ENCODE measurements at regions of chr9 and their contacts with region 1.

Region 1: DNA sequence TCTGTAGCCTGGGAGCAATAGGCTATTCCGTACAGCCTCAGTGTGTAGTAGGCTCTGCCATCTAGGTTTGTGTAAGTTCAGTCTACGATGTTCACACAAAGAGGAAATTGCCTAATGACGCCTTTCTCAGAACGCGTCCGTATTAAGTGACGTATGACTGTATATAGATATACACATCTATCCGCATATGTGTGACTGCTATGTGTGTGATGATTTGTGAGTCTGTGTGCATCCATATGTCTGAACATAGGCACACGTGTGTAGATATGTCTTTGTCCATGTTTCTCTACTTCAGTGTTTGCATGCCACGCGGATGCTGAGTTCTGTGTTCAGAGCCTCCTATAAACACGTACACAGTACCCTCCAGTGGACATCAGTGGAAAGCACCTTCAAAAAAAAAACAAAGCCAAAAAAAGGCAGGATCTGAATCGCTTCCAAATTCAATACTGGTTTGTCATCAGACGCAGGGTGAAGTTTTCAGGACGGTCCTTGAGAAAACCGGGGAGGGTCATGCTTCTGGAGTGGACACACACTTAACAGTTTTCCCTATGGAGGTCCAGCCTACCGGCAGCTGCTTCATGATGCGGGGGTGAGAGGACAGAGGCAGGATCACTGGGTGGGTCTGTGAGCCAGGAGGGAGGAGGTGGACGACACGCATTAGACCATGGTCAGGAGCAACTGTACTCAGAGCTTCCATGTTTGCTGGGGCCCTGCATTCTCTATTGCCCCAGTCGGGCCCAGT is 29.5 kb upstream of the ALDH1B1 start:
- DNase-seq: peak in 1 of 2 donors; percentile 73
- ATAC-seq: peak; percentile 80
- H3K4me3 ChIP-seq: no peak overlapping the region
- H3K27ac ChIP-seq: no peak overlapping the region
- H3K4me1 ChIP-seq: no peaks in the 10 kb centered on the region
- H3K27me3 ChIP-seq: no peaks in the 10 kb centered on the region

Region 2: DNA sequence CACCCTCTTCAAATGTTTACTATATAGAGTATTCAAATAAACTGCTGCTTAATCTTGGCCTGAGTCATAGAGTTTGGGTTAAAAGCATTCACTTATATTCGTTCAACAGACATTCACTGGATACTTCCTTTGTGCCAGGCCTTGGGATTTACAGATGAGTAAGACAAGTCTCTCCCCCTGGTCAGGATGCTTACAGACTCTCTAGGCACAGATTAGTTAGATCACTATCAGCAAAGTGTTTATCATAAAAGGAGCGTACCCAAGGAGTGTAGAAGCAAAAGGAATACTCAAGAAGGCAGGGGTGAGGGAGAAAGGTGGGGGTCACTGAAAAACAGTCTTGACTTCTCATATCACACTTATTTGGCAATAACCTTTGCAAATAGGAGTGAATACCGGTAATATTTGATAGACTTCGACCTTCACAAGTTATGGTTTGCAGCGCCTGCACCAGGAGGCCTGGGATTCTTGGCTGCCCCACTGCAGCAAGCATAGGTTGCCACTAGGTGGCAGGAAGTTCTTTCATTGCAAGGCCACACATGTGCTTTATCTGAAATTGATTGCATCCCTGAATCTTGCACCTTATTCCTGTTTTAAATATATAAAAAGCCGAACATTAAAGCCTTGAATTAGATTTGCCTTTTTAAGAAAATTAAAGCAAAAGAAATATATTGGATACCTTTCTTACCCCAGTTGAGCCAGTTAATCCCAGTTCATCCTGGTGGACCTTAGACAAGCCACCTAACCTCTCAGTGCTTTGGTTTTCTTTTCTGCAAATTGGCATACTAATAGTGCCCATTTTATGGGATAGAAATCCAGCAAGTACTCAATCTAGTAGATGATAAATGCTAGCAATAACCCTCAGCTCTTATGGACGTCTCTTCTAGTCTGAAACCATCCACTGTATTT is 615.9 kb before region 1 on chr9:
- intact Hi-C with region 1: loop called in 1 of 2 experiments (anchors 5 kb)
- DNase-seq: peak in 1 of 2 donors; percentile 65
- ATAC-seq: peak; percentile 71
- H3K4me3 ChIP-seq: no peak overlapping the region
- H3K27ac ChIP-seq: no peak overlapping the region
- H3K4me1 ChIP-seq: no peaks in the 10 kb centered on the region
- H3K27me3 ChIP-seq: no peaks in the 10 kb centered on the region

Region 3: GRCh38 chr9:38074441-38074961 is 288.5 kb before region 1 on chr9:
- intact Hi-C with region 1: loop called in 1 of 2 experiments (anchors 5 kb)
- DNase-seq: no peak
- ATAC-seq: no peak
- H3K4me3 ChIP-seq: no peak overlapping the region
- H3K27ac ChIP-seq: no peak overlapping the region
- H3K4me1 ChIP-seq: peaks cover 0 to 2% of the 10 kb centered on the region in 2 donors
- H3K27me3 ChIP-seq: no peaks in the 10 kb centered on the region

Region 4: GRCh38 chr9:38088006-38088925 is 274.8 kb before region 1 on chr9:
- intact Hi-C with region 1: loop called (anchors 5 kb)
- DNase-seq: peak; percentile 79 to 93
- ATAC-seq: peak; percentile 85
- H3K4me3 ChIP-seq: no peak overlapping the region
- H3K27ac ChIP-seq: no peak overlapping the region
- H3K4me1 ChIP-seq: no peaks in the 10 kb centered on the region
- H3K27me3 ChIP-seq: no peaks in the 10 kb centered on the region

Region 5: GRCh38 chr9:38160613-38161215 is 202.3 kb before region 1 on chr9:
- intact Hi-C with region 1: loop called in 1 of 2 experiments (anchors 10 kb)
- DNase-seq: peak in 1 of 2 donors; percentile 70
- ATAC-seq: peak; percentile 56
- H3K4me3 ChIP-seq: no peak overlapping the region
- H3K27ac ChIP-seq: no peak overlapping the region
- H3K4me1 ChIP-seq: no peaks in the 10 kb centered on the region
- H3K27me3 ChIP-seq: no peaks in the 10 kb centered on the region

Region 6: GRCh38 chr9:38311382-38312270 is 51.4 kb before region 1 on chr9:
- intact Hi-C with region 1: loop called (anchors 1 to 5 kb)
- DNase-seq: peak in 1 of 2 donors; percentile 69
- ATAC-seq: peak; percentile 83
- H3K4me3 ChIP-seq: peak overlapping the region; percentile 18 to 60
- H3K27ac ChIP-seq: peak overlapping the region; percentile 14 to 82
- H3K4me1 ChIP-seq: no peaks in the 10 kb centered on the region
- H3K27me3 ChIP-seq: no peaks in the 10 kb centered on the region

Region 7: GRCh38 chr9:38322937-38323336 is 40.1 kb before region 1 on chr9:
- intact Hi-C with region 1: no loop called
- DNase-seq: no peak
- ATAC-seq: no peak
- H3K4me3 ChIP-seq: no peak overlapping the region
- H3K27ac ChIP-seq: no peak overlapping the region
- H3K4me1 ChIP-seq: peaks cover 0 to 2% of the 10 kb centered on the region in 2 donors
- H3K27me3 ChIP-seq: no peaks in the 10 kb centered on the region

Region 8: DNA sequence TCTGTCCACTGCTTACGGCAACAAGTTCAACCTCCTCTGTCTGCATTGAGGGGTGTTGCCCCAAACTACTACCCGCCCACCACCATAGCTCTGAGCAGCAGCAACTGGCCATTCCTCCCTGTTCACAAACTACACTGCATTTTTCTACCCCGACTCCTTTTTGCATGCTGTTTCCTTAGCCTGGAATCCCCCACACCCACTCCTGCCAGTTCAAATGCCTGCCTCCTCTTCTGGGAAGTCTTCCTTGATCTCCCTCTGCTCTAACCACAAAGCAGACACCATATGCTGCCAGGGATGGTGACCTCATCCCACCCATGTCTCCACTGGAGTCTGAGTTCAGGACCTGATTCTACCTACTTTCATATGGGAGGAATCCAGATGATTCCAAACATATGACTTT is 42.8 kb after region 1 on chr9:
- intact Hi-C with region 1: no loop called
- DNase-seq: peak in 1 of 2 donors; percentile 17
- ATAC-seq: no peak
- H3K4me3 ChIP-seq: no peak overlapping the region
- H3K27ac ChIP-seq: no peak overlapping the region
- H3K4me1 ChIP-seq: no peaks in the 10 kb centered on the region
- H3K27me3 ChIP-seq: no peaks in the 10 kb centered on the region

Measured in aorta (tissue), 5 donors.